ENCODE measurements at regions of chr16 and their contacts with region 1.

Region 1: DNA sequence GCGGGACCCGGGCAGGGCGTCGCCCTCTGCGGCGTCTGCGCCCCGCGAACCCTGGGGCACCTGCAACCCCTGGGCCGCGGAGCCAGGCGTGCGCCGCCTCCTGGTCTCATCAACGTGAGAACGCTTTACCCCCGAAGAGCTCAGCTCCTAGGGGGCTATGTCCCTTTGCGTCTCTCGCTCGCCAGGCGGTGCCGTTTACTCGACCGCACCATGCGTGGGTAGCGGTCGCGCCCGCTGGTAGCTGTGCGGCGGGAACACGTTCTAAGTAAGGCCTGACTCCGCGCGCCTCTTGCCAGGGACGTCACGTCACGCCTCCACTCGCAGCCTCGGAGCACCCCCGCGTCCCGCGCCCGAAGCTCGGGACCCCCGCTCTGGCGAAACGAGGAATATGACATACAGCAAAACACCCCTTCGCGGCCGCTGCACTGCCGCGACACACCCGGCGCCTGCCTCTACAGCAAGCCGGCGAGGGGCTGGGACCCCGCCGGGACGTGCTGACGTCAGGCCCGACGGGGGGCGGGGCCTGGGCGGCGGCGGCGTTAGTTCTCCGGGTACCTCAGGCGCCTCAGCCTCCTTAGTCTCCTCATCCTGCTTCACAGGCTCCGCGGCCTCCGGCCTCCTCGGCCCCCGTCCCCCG is at the start of gene RAB11FIP3:
- DNase-seq: peak; percentile 92
- ATAC-seq: peak; percentile 91
- H3K4me3 ChIP-seq: peak within 1 kb of the TSS in 4 of 5 experiments; percentile 52 to 71 (median 71)
- H3K4me3 Mint-ChIP-seq: peak within 1 kb of the TSS; percentile 93
- H3K27ac ChIP-seq: peak within 1 kb of the TSS; percentile 51 to 92
- H3K27ac Mint-ChIP-seq: peak within 1 kb of the TSS; percentile 91
- H3K4me1 ChIP-seq: peaks cover 16 to 22% of the 10 kb centered on the region in 2 donors
- H3K4me1 Mint-ChIP-seq: peaks cover 25% of the 10 kb centered on the region
- H3K27me3 ChIP-seq: peaks cover 0 to 14% (median 2%) of the 10 kb centered on the region in 4 experiments
- H3K27me3 Mint-ChIP-seq: peaks cover 9% of the 10 kb centered on the region
- CTCF ChIP-seq: peak; percentile 49
- total RNA-seq, gene RAB11FIP3: 57.2 and 60.6 TPM in 2 replicates

Region 2: DNA sequence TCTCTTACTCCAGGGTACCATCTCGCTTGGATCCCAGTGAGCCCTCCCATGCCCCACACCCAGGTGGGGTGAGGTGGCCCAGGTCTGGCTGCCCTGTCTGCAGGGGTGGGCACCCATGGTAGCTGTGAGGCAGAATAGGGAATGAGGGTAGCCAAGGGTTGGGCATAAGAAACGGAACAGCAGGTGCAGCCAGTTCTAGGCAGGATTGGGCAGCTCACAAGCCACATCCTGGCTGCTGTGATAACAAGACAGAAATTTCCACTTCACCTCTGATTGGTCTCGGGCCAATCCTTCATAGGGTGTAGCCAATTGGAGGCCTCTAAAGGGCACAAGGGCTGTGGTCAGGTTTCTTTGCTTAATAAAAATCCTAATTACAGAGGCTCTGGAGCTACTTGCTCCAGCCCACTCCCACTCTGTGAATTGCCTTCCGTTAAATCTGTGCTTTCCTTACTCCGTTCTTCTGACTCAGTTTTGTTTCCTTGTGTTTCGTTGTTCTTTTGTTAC is 146.3 kb before region 1 on chr16:
- CTCF ChIA-PET with region 1: no interaction called
- POLR2A ChIA-PET with region 1: no interaction called
- intact Hi-C with region 1: no loop called
- DNase-seq: no peak
- ATAC-seq: no peak
- H3K4me3 ChIP-seq: no peak overlapping the region
- H3K4me3 Mint-ChIP-seq: peak overlapping the region; percentile 14
- H3K27ac ChIP-seq: no peak overlapping the region
- H3K27ac Mint-ChIP-seq: no peak overlapping the region
- H3K4me1 ChIP-seq: peaks cover 0 to 13% of the 10 kb centered on the region in 2 donors
- H3K4me1 Mint-ChIP-seq: peaks cover 7% of the 10 kb centered on the region
- H3K27me3 ChIP-seq: peaks cover 0 to 42% (median 7%) of the 10 kb centered on the region in 4 experiments
- H3K27me3 Mint-ChIP-seq: peaks cover 22% of the 10 kb centered on the region
- CTCF ChIP-seq: no peak

Region 3: DNA sequence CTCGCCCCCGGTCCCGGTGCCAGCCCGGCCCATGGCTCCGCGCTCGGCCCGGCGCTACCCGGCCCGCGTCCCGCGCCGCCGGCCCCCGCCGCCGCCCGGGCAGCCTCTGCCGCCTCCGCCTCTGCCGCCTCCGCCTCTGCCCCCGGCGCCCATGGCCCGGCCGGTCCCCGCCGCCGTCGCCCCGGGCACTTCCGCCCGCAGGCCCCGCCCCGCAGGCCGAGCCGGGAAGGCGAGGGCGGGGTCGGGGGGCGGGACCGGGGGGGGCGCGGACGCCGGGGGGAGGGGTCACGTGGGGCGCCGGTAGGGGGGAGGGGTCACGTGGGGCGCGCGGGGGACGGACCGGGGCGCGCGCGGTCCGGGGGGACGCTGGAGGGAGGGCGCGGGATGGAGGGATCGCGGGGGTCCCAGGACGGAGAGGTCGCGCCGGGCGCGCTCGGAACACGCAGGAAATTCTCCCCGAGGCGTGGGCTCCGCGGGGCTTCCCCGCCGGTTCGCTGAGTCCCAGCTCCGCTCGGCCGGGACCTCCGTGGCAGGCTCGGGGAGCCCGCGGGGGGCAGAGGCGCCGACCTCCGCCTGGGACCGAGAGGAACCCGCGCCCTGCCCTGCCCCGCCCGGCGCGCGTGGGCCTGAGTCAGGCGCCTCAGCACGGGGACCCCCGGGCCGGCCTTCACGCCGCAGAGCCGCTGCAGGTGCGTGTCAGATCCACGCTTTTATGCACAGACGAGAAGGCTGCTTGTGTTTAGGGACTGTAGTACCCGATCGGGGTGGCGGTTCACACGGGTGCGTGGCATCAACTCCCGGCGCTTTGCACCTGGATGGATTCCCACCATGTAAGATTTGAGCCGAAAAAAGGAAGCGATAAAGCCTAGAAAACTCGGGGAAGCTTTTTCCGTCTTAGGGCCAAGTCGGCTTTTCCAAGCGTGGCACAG is 43.1 kb before region 1 on chr16 and contains the start of gene PGAP6:
- CTCF ChIA-PET with region 1: no interaction called
- POLR2A ChIA-PET with region 1: no interaction called
- intact Hi-C with region 1: loop called (anchors 5 kb)
- DNase-seq: peak; percentile 80
- ATAC-seq: peak; percentile 73
- H3K4me3 ChIP-seq: peak within 1 kb of the TSS; percentile 60 to 99 (median 72)
- H3K4me3 Mint-ChIP-seq: peak within 1 kb of the TSS; percentile 97
- H3K27ac ChIP-seq: peak within 1 kb of the TSS; percentile 55 to 84
- H3K27ac Mint-ChIP-seq: peak within 1 kb of the TSS; percentile 93
- H3K4me1 ChIP-seq: peaks cover 21 to 33% of the 10 kb centered on the region in 2 donors
- H3K4me1 Mint-ChIP-seq: peaks cover 22% of the 10 kb centered on the region
- H3K27me3 ChIP-seq: no peaks in the 10 kb centered on the region
- H3K27me3 Mint-ChIP-seq: no peaks in the 10 kb centered on the region
- CTCF ChIP-seq: no peak
- total RNA-seq, gene PGAP6: 47.4 and 50.8 TPM in 2 replicates

Region 4: DNA sequence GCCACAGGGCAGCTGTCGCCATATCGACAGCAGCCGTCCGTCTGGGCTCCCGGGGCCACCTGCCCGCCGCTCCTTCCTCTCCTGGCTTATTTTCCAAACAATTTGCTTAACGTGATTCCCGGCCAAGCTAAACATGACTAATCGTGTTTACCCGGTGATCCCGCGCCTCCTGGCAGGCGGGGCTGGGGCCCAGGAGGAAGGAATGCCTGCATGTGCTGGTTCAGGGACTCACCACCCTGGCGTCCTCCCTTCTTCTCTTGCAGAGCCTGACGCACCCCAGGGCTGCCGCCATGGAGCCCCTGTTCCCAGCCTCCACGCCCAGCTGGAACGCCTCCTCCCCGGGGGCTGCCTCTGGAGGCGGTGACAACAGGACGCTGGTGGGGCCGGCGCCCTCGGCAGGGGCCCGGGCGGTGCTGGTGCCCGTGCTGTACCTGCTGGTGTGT is 653.4 kb after region 1 on chr16:
- CTCF ChIA-PET with region 1: no interaction called
- POLR2A ChIA-PET with region 1: no interaction called
- intact Hi-C with region 1: no loop called
- DNase-seq: no peak
- ATAC-seq: no peak
- H3K4me3 ChIP-seq: no peak overlapping the region
- H3K4me3 Mint-ChIP-seq: no peak overlapping the region
- H3K27ac ChIP-seq: no peak overlapping the region
- H3K27ac Mint-ChIP-seq: no peak overlapping the region
- H3K4me1 ChIP-seq: no peaks in the 10 kb centered on the region
- H3K4me1 Mint-ChIP-seq: no peaks in the 10 kb centered on the region
- H3K27me3 ChIP-seq: peaks cover 0 to 26% (median 0%) of the 10 kb centered on the region in 4 experiments
- H3K27me3 Mint-ChIP-seq: peaks cover 15% of the 10 kb centered on the region
- CTCF ChIP-seq: no peak

Measured in B cell (primary cell).